SK-N-SH (cell line): ENCODE measurements at regions of chr2 and their contacts with region 1.

Region 1: DNA sequence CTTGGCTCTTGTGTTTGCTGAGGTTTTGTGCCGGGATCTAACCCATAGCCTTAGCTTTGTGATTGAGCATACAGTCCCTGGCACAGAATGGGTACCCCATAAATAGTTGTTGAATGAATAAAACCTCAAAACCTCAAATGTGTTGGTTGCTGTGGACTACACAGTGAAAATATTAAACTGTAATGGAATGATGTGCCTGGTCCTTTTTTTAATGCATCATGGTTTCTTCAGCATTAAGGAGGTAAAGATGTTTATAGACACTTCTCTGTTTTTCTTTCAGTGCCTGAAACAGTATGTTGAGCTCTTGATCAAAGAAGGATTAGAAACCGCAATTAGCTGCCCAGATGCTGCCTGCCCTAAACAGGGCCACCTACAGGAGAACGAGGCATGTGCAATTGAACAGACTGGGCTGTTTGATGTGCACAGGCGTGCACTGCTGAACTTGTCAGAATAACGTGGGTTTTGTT is 97.0 kb downstream of the RNF144A start:
- DNase-seq: peak; percentile 63
- H3K4me3 ChIP-seq: peak overlapping the region in 1 of 2 experiments; percentile 3; a peak in 1 of 4 replicates
- H3K27ac ChIP-seq: peak overlapping the region; percentile 99
- H3K4me1 ChIP-seq: peaks cover 46 to 94% of the 10 kb centered on the region in 2 experiments
- H3K27me3 ChIP-seq: no peaks in the 10 kb centered on the region
- CTCF ChIP-seq: peak; percentile 80
- EP300 ChIP-seq: no peak
- RAD21 ChIP-seq: peak; percentile 71

Region 2: DNA sequence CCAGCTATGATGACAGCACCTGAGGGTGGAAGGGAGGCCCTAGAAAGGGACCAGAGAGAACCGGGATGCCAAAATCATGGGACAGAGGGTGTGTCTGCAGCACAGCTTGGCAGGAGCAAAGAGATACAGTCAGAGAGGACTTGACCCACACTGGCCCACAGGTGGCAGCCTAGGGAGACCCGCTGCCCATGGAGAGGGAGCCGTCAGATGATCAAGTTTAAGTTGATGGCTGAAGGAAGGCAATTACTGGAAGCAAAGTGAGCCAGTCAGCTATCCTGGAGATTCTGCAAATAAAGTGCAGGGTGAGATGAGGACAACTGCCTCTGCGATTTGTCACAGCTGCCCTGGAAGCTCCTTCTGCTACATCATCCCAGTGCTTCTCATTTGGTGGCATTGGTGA is 222.5 kb before region 1 on chr2:
- CTCF ChIA-PET with region 1: no interaction called
- POLR2A ChIA-PET with region 1: no interaction called
- DNase-seq: no peak
- H3K4me3 ChIP-seq: no peak overlapping the region
- H3K27ac ChIP-seq: no peak overlapping the region
- H3K4me1 ChIP-seq: peaks cover 0 to 7% of the 10 kb centered on the region in 2 experiments; a peak in 1 of 4 replicates
- H3K27me3 ChIP-seq: no peaks in the 10 kb centered on the region
- CTCF ChIP-seq: peak; percentile 21; the same call in 1 of the 2 replicates
- EP300 ChIP-seq: no peak
- RAD21 ChIP-seq: no peak

Region 3: GRCh38 chr2:6835467-6835866 is 178.7 kb before region 1 on chr2:
- CTCF ChIA-PET with region 1: no interaction called
- POLR2A ChIA-PET with region 1: no interaction called
- DNase-seq: no peak
- H3K4me3 ChIP-seq: no peak overlapping the region
- H3K27ac ChIP-seq: no peak overlapping the region
- H3K4me1 ChIP-seq: no peaks in the 10 kb centered on the region
- H3K27me3 ChIP-seq: no peaks in the 10 kb centered on the region
- CTCF ChIP-seq: no peak
- EP300 ChIP-seq: no peak
- RAD21 ChIP-seq: no peak

Region 4: DNA sequence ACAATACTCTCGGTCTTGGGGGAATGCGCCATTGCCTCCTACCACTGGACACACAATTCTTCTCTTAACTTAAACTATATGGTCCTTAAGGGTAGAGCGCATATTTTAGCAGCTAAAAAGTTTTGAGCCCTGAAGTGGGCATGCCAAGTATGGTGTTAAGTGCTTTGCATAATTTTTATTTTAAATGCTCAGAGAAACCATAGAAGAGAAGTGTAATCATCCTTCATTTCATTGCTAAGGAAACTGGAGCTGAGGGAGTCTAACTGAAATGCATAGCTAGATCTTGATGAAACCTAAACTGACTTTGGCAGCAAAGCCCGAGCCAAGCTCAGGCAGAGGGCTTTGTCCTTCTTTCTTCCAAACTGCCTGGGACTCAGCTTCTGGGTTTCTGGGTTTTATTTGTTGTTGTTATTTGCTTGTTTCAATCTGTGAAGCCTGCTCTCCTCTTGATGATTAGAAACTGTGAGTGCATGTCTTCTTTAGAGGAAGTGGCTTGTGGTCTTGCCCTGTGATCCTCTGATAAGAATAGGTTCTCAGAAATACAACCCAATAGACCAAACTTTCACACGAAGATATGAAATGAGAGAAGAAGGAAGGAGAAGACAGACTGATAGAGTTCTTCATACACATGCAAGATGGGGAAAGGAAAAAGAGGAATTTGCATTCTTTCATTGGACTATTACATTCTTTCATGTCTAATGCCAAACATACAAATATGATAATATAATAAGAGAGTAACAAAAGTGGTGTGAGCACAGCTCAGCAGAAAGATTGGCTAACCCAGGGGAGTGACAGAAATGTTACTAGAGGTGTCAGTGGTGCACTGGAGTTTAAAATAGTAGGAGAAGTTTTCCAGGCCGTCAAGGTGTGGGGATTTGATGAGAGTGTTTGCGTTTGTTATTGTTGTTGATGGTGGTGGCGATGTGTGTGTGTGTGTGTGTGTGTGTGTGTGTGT is 104.5 kb before region 1 on chr2:
- CTCF ChIA-PET with region 1: interaction called, 437 read pairs
- POLR2A ChIA-PET with region 1: no interaction called
- DNase-seq: no peak
- H3K4me3 ChIP-seq: no peak overlapping the region
- H3K27ac ChIP-seq: no peak overlapping the region
- H3K4me1 ChIP-seq: no peaks in the 10 kb centered on the region; a peak in 1 of 4 replicates
- H3K27me3 ChIP-seq: no peaks in the 10 kb centered on the region
- CTCF ChIP-seq: no peak
- EP300 ChIP-seq: no peak
- RAD21 ChIP-seq: no peak

Region 5: DNA sequence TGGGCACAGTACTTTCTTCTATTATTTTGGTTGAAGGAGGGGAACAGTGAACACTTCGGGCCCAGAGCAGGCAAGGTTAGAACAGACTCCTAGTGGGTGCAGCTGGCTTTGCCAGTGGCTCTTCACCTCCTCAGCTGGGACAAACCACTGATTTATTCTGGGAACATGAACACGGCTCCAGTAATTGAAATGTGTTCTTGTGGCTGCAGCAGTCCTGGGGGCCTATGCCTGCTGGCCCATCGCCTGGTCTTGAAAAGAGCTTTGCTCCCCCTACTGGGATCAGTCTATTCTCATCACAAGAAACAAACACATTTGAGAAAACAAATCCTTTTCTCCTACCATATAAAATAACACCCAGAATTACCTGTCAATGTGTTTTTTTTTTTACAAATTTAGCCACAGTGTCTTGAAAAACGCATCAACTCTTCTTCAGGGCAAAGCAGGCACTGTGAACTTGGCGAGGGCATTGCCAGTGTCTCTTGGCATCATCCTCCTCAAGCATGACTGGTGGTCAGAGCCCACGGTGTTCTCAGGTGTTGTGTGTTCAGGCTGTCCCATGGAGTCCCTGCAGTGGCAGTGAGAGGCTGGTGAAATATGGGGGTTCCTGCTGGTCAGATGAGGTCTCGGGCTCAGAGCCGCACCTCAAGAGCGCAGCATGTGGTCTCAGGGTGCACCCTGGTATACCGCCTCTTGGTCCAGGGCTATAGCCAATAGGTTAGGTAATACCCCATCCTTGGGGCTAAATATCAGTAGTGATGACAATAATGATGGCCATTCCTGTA is 45.7 kb before region 1 on chr2:
- CTCF ChIA-PET with region 1: interaction called, 18 read pairs
- POLR2A ChIA-PET with region 1: no interaction called
- DNase-seq: peak; percentile 50
- H3K4me3 ChIP-seq: no peak overlapping the region
- H3K27ac ChIP-seq: peak overlapping the region in 1 of 2 experiments; percentile 39; a peak in 1 of 4 replicates
- H3K4me1 ChIP-seq: peaks cover 0 to 26% of the 10 kb centered on the region in 2 experiments; a peak in 1 of 4 replicates
- H3K27me3 ChIP-seq: no peaks in the 10 kb centered on the region
- CTCF ChIP-seq: peak; percentile 32; the same call in 1 of the 2 replicates
- EP300 ChIP-seq: no peak
- RAD21 ChIP-seq: peak; percentile 56

Region 6: DNA sequence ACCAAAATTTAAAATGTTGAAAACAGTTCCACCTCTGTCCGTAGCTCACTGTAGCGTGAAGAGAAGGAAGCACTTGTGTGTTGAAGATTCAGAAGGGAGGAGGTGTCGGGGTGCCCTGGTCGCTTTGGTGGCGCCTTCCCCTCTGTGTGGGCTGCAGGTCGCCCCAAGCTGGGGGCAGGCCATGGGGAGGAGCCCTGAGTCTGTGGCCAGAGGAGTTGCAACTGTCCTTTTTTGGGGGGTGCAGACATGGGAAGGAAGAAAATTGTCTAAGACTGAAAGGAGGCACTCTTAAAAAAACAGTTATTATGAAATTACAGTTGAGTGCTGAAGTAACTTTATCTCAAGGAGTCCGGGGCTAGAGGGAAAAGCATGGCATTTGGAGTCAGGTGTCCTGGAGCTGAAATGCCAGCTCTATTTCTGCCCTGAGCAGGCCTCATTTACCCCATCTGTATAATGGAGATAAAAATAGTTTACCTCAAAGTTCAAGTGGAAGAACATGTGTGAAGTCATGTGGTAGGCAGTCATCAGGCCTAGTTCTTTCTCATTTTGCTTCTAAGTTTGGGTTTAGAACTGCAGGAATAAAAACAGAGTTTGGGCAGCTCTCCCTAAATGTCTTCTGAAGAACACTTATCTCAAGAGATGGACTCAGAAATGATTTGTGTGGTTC is 14.9 kb before region 1 on chr2:
- CTCF ChIA-PET with region 1: interaction called, 128 read pairs
- POLR2A ChIA-PET with region 1: no interaction called
- DNase-seq: no peak
- H3K4me3 ChIP-seq: no peak overlapping the region
- H3K27ac ChIP-seq: no peak overlapping the region; a peak in 1 of 4 replicates
- H3K4me1 ChIP-seq: peaks cover 0 to 16% of the 10 kb centered on the region in 2 experiments; a peak in 2 of 4 replicates
- H3K27me3 ChIP-seq: no peaks in the 10 kb centered on the region
- CTCF ChIP-seq: no peak
- EP300 ChIP-seq: no peak
- RAD21 ChIP-seq: no peak

Region 7: DNA sequence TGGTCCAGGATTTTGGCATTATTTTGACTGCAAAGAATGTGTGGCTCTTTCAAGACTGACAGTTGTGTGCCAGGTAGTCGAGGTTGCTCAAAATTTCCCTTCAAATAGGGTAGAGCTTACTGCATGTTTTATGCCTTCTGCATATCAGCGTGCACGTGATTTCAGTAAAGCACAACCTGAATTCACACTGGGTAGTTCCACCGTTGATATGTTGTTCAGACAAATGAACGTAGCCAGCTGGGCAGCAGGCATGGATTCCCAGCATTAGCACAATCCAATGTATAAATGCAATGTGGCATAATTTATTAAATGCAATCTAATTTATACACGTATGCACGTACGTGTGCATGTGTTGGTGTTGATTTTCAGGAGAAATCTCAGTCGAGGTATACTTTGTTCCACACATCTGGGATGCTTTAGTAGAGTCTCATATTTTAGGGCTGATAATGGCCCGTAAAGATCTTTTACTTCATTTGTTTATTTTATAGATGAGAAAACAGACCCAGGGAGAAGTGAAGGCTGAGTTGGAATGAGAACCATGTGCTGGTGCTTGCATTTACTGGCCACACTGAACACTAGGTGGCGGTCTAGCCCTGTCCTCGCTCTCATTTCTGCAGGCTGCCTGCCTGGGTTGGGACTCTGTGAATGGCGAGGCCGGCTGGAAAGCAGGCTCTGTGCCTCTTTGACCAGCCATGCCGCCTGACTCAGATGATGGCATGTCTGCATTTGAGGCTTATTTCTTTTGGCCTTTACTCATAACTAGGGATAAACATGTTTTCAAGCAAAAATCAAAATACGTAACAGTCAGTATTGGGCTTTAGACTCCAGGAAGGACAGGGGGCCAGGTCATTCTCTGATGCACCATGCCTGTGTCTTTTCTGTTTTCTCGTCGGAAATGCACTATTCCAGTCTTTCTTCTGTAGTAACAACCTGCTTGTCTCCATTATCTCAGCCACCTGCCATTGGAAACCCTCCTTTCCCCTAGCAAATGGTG is 23.4 kb after region 1 on chr2:
- CTCF ChIA-PET with region 1: interaction called, 226 read pairs
- POLR2A ChIA-PET with region 1: no interaction called
- DNase-seq: peak; percentile 87
- H3K4me3 ChIP-seq: no peak overlapping the region
- H3K27ac ChIP-seq: peak overlapping the region in 1 of 2 experiments; percentile 31; a peak in 1 of 4 replicates
- H3K4me1 ChIP-seq: peaks cover 0 to 29% of the 10 kb centered on the region in 2 experiments; a peak in 2 of 4 replicates
- H3K27me3 ChIP-seq: no peaks in the 10 kb centered on the region
- CTCF ChIP-seq: peak; percentile 91
- EP300 ChIP-seq: no peak
- RAD21 ChIP-seq: peak; percentile 98

Region 8: DNA sequence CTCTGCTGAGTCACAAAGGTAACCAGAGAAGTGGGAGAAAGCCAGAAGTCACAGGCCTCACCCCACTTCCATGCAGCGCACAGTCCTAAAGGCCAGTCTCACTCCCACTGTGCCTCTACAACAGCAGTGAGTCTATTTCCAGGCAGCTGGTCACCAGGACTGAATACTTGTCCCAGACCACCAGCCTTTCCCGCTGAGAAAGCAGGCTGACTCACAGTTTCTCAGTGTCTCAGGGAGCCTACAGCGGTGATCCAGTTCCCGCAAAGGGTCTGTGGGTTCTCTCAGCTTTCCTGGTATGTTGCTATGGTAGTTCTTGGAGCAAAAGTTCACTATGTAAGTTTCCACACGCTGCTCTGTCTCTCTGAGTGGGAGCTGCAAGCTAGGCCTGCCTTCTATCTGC is 525.6 kb after region 1 on chr2:
- CTCF ChIA-PET with region 1: no interaction called
- POLR2A ChIA-PET with region 1: no interaction called
- DNase-seq: no peak
- H3K4me3 ChIP-seq: no peak overlapping the region
- H3K27ac ChIP-seq: no peak overlapping the region
- H3K4me1 ChIP-seq: peaks cover 0 to 7% of the 10 kb centered on the region in 2 experiments; a peak in 1 of 4 replicates
- H3K27me3 ChIP-seq: no peaks in the 10 kb centered on the region
- CTCF ChIP-seq: no peak
- EP300 ChIP-seq: no peak
- RAD21 ChIP-seq: no peak